OCI-LY7 (cell line): ENCODE measurements at regions of chr15 and their contacts with region 1.

Region 1: GRCh38 chr15:84748274-84749110 is at the start of gene ZNF592:
- DNase-seq: peak; percentile 84
- H3K4me3 ChIP-seq: peak within 1 kb of the TSS; percentile 95
- H3K27ac ChIP-seq: peak within 1 kb of the TSS; percentile 82
- H3K4me1 ChIP-seq: peaks cover 57% of the 10 kb centered on the region
- CTCF ChIP-seq: 0 out of 2 replicates have a peak, but pooled peaks have one; percentile 6
- total RNA-seq, gene ZNF592: 17.1 and 23.0 TPM in 2 replicates

Region 2: GRCh38 chr15:84600851-84601838 is 147.3 kb before region 1 on chr15 and contains the start of gene ZSCAN2:
- CTCF ChIA-PET with region 1: no interaction called
- POLR2A ChIA-PET with region 1: no interaction called
- intact Hi-C with region 1: loop called (anchors 5 kb)
- DNase-seq: peak; percentile 93
- H3K4me3 ChIP-seq: peak within 1 kb of the TSS; percentile 83
- H3K27ac ChIP-seq: no peak within 1 kb of the TSS
- H3K4me1 ChIP-seq: peaks cover 47% of the 10 kb centered on the region
- CTCF ChIP-seq: no peak
- total RNA-seq, gene ZSCAN2: 12.4 and 21.7 TPM in 2 replicates

Region 3: DNA sequence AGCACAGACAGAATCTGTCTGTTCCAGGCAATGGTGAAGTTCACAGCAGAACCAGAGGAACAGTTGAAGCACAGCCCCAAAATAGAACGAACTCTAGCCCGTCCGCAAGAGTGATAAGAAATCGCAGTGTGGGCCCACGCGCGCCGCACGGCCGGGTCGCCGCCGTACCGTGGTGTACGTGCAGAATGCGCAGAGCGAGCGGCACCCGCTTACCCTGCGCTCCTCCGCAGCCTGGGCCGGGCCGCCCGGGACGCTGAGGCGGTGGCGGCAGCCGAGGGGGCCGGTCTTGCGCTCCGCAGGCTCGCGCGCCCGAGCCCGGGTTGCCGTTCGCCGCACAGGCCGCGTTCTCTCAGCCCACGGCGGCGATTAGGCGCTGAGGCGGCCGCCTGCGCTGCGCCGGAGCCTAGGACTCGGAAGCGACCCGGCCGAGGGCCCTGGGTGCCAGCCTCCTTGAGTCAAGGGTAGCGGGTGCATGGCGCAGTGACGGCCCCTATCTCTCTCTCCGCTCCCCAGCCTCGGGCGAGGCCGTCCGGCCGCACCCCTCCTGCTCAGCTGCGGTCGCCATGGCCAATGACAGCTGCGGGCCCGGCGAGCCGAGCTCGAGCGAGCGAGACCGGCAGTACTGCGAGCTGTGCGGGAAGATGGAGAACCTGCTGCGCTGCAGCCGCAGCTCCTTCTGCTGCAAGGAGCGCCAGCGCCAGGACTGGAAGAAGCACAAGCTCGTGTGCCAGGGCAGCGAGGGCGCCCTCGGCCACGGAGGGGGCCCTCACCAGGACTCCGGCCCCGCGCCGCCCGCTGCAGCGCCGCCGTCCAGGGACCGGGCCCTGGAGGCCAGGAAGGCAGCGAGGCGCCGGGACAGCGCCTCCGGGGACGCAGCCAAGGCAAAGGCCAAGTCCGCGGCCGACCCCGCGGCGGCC is 114.9 kb before region 1 on chr15:
- CTCF ChIA-PET with region 1: no interaction called
- POLR2A ChIA-PET with region 1: interaction called, 4 read pairs
- intact Hi-C with region 1: loop called (anchors 1 kb)
- DNase-seq: peak; percentile 79
- H3K4me3 ChIP-seq: peak overlapping the region; percentile 76
- H3K27ac ChIP-seq: peak overlapping the region; percentile 18
- H3K4me1 ChIP-seq: peaks cover 40% of the 10 kb centered on the region
- CTCF ChIP-seq: 0 out of 2 replicates have a peak, but pooled peaks have one; percentile 16

Region 4: GRCh38 chr15:84716036-84716799 is 32.3 kb before region 1 on chr15 and contains the start of gene SEC11A:
- CTCF ChIA-PET with region 1: no interaction called
- POLR2A ChIA-PET with region 1: interaction called, 10 read pairs
- intact Hi-C with region 1: loop called (anchors 1 kb)
- DNase-seq: peak; percentile 96
- H3K4me3 ChIP-seq: peak within 1 kb of the TSS; percentile 89
- H3K27ac ChIP-seq: peak within 1 kb of the TSS; percentile 59
- H3K4me1 ChIP-seq: peaks cover 32% of the 10 kb centered on the region
- CTCF ChIP-seq: no peak
- total RNA-seq, gene SEC11A: 41.4 and 47.0 TPM in 2 replicates

Region 5: GRCh38 chr15:84734794-84735479 is 13.6 kb before region 1 on chr15:
- CTCF ChIA-PET with region 1: interaction called, 3 read pairs
- POLR2A ChIA-PET with region 1: interaction called, 29 read pairs
- intact Hi-C with region 1: loop called (anchors 1 kb)
- DNase-seq: peak; percentile 95
- H3K4me3 ChIP-seq: peak overlapping the region; percentile 62
- H3K27ac ChIP-seq: peak overlapping the region; percentile 98
- H3K4me1 ChIP-seq: peaks cover 59% of the 10 kb centered on the region
- CTCF ChIP-seq: no peak